ENCODE measurements at regions of chr20 and their contacts with region 1.

Region 1: GRCh38 chr20:34834459-34834893 is 9.0 kb upstream of the NCOA6 start:
- DNase-seq: no peak
- H3K4me3 Mint-ChIP-seq: peak overlapping the region; percentile 47
- H3K27ac Mint-ChIP-seq: no peak overlapping the region
- H3K4me1 Mint-ChIP-seq: no peaks in the 10 kb centered on the region
- H3K27me3 Mint-ChIP-seq: peaks cover 44% of the 10 kb centered on the region
- CTCF ChIP-seq: peak; percentile 15

Region 2: GRCh38 chr20:34955232-34956040 is 121.0 kb after region 1 on chr20 and contains the starts of genes GSS and MYH7B:
- CTCF ChIA-PET with region 1: interaction called, 3 read pairs
- intact Hi-C with region 1: loop called (anchors 1 kb)
- DNase-seq: peak; percentile 100
- H3K4me3 Mint-ChIP-seq: peak within 1 kb of the TSS; percentile 95
- H3K27ac Mint-ChIP-seq: peak within 1 kb of the TSS; percentile 86
- H3K4me1 Mint-ChIP-seq: peaks cover 21% of the 10 kb centered on the region
- H3K27me3 Mint-ChIP-seq: no peaks in the 10 kb centered on the region
- CTCF ChIP-seq: no peak
- total RNA-seq, gene GSS: 110 and 116 TPM in 2 replicates
- total RNA-seq, gene MYH7B: 0.52 and 0.73 TPM in 2 replicates

Region 3: DNA sequence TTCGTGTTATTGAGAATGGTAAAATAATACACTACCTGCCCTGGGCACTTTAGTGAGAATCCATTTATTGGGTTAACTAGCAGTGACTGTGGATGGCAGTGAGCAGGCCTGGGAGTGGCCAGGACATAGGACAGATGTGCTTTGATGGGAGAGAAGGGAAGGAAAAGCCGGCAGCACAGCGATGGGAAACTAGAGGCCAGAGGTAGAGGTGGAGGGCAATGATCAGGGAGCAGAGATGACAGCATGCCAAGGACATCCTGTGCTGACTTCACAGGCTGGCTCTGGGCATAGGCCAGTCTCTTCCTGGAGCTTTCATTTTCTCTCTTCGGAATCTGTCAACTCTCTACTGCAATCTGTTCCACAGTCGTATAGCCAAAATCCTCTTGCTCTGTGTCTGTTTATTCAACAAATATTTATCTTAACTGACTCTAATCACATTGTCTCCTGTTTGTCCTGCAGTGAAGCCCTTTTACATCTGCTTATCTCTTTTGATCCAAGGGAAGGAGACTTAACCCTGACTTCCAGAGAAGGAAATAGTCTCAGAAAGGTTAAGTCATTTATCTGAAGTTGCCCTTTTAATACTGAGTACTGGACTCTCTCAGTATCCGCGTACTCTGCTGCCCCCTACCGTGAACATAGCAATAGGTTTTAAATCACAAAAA is 373.6 kb after region 1 on chr20:
- CTCF ChIA-PET with region 1: no interaction called
- intact Hi-C with region 1: loop called (anchors 10 kb)
- DNase-seq: peak; percentile 93
- H3K4me3 Mint-ChIP-seq: no peak overlapping the region
- H3K27ac Mint-ChIP-seq: no peak overlapping the region
- H3K4me1 Mint-ChIP-seq: peaks cover 8% of the 10 kb centered on the region
- H3K27me3 Mint-ChIP-seq: no peaks in the 10 kb centered on the region
- CTCF ChIP-seq: peak; percentile 77